ENCODE measurements at regions of chr21 and their contacts with region 1.

Region 1: DNA sequence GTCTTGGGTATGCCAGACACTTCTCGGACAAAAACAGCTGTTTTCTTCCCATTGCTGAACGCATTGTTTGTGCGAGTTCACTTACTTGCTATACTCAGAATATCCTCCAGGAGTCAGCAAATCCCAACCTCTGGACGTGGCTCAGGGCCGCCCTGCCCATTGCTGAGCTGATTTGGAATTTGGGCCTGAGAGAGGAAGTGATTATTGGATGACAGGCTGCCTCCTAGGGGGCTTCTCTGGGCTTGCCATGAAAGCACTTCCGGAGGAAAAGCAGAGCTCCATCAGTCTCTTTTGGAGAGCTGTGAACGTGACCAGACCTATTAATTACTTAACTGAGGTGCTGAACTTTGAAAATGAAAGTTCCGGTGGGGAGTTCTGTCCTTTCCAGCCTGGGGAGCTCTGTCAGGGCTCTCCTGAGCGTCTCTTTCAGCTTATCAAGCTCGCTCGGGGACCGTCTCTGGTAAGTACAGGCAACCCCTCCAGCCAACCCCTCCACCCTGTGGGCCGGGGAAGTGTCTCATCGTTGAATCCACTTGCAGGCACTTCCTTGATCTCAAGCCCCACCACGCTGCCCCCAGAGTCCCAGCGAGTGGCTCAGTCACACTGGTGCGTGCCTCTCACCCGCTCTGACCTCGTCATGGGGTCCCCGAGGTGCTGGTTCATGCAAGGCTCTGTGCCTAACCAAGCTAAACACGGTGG is 76.9 kb downstream of the CLIC6 start:
- DNase-seq: peak; percentile 82 to 84
- ATAC-seq: peak; percentile 89
- H3K4me3 ChIP-seq: no peak overlapping the region
- H3K27ac ChIP-seq: no peak overlapping the region
- H3K4me1 ChIP-seq: no peaks in the 10 kb centered on the region
- H3K27me3 ChIP-seq: no peaks in the 10 kb centered on the region

Region 2: DNA sequence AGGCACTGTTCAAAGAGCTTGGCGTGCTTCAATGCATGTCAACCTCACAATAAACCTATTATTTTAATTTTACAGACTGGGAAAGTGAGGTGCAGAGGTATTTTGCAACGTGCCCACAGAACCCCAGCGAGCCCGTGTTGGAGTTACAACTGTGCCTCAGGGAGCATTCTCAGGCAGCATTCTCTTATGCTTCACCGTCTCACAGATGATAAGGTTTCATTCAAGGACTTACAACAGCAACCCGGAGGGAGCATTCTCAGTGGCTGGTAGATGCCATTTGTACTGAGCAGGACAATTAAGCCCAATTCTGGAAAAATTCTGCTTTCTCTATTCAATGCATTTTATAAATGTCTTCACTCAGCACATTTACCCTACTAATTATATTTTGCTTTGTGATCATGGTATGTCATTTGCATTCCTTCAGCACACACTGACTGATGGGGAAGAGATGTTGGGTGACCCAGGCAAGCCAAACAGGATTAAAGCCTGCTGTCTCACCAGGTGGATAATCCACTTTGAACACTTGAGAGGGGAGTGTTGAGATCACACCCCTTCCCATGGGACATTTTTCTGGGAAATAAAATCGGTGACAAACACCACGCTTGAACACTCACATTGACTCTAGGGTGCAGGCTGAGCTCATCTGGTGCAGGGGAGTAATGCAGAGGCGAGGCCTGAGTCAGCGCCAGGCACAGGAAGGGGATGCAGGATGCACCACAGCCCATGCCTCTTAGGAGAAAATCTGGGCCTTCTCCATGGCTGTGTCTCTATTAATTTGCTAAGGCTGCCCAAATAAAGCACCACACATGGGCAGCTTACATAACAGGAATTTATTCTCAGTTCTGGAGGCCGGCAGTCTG is 37.0 kb after region 1 on chr21:
- intact Hi-C with region 1: no loop called
- DNase-seq: no peak
- ATAC-seq: no peak
- H3K4me3 ChIP-seq: no peak overlapping the region
- H3K27ac ChIP-seq: no peak overlapping the region
- H3K4me1 ChIP-seq: no peaks in the 10 kb centered on the region
- H3K27me3 ChIP-seq: no peaks in the 10 kb centered on the region

Region 3: DNA sequence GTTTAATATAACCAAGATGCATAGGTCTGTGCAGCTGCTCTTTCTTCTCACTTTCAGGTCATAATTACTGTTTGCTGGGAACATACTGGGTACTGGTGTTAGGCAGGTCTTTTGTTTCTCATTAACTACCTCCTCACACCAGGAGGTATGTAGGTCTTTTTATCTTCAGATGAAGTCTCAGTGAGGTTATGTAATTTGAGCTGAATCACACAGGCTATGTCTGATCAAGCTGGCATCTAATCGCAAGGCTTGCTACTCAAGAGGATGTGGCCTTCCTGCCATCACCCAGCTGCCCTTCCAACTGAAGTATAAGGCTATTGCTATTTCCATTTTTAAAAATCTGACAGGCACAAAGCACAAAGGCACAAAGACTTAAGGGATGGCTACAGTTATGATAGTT is 207.0 kb after region 1 on chr21:
- intact Hi-C with region 1: no loop called
- DNase-seq: no peak
- ATAC-seq: no peak
- H3K4me3 ChIP-seq: no peak overlapping the region
- H3K27ac ChIP-seq: no peak overlapping the region
- H3K4me1 ChIP-seq: no peaks in the 10 kb centered on the region
- H3K27me3 ChIP-seq: peaks cover 0 to 2% of the 10 kb centered on the region in 2 donors

Region 4: GRCh38 chr21:35400233-35400957 is 654.7 kb after region 1 on chr21:
- intact Hi-C with region 1: loop called (anchors 2 to 10 kb)
- DNase-seq: no peak
- ATAC-seq: no peak
- H3K4me3 ChIP-seq: no peak overlapping the region
- H3K27ac ChIP-seq: no peak overlapping the region
- H3K4me1 ChIP-seq: no peaks in the 10 kb centered on the region
- H3K27me3 ChIP-seq: no peaks in the 10 kb centered on the region

Region 5: GRCh38 chr21:35616090-35616489 is 870.4 kb after region 1 on chr21:
- intact Hi-C with region 1: loop called in 1 of 2 experiments (anchors 10 kb)
- DNase-seq: no peak
- ATAC-seq: no peak
- H3K4me3 ChIP-seq: no peak overlapping the region
- H3K27ac ChIP-seq: no peak overlapping the region
- H3K4me1 ChIP-seq: no peaks in the 10 kb centered on the region
- H3K27me3 ChIP-seq: no peaks in the 10 kb centered on the region

Region 6: GRCh38 chr21:35840197-35840799 is 1094.6 kb after region 1 on chr21:
- intact Hi-C with region 1: loop called (anchors 2 to 5 kb)
- DNase-seq: peak in 1 of 2 donors; percentile 67
- ATAC-seq: no peak
- H3K4me3 ChIP-seq: no peak overlapping the region
- H3K27ac ChIP-seq: no peak overlapping the region
- H3K4me1 ChIP-seq: no peaks in the 10 kb centered on the region
- H3K27me3 ChIP-seq: no peaks in the 10 kb centered on the region

Region 7: DNA sequence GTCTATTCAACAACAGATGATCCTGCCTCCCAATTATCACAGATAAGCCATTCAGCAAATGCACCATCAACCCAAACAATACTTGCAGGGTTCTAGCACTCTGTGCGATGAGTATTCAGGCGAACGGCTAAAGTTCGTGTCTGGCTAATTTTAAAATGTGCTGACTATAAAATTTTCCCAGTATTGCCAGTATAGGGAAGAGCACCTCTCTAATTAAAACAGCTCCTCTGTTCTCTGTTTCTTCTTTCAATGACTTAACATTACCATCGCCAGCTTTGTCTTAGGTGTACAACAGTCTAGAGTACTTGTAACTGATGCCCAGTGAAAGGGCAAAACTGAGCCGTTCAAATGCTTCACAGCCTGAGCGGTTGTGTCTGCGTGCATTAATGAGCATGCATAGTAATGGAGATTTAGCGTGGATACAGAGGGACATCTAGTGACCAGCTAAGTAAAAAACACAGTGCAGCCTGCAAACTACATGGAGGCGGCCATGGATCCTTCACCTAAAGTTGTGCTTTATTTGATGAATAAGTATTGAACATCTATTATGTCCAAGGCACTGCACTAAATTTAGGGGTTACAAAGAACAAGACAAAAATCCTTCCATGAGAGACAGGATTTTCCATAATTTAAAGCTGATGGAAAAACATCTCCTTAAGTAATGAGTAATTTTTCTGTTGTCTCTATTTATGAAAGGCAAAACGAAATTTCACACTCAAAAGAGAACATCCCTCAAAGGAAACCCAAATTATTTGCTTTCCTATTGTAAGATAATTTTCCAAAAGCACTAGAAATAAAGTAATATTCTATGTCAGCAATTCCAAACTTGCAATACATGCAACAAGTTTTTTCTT is 1194.6 kb after region 1 on chr21:
- intact Hi-C with region 1: loop called (anchors 2 to 5 kb)
- DNase-seq: peak in 1 of 2 donors; percentile 59
- ATAC-seq: peak; percentile 85
- H3K4me3 ChIP-seq: no peak overlapping the region
- H3K27ac ChIP-seq: no peak overlapping the region
- H3K4me1 ChIP-seq: no peaks in the 10 kb centered on the region
- H3K27me3 ChIP-seq: no peaks in the 10 kb centered on the region

Region 8: GRCh38 chr21:36028127-36029069 is 1282.7 kb after region 1 on chr21:
- intact Hi-C with region 1: loop called (anchors 5 to 10 kb)
- DNase-seq: peak; percentile 74 to 85
- ATAC-seq: peak; percentile 89
- H3K4me3 ChIP-seq: no peak overlapping the region
- H3K27ac ChIP-seq: no peak overlapping the region
- H3K4me1 ChIP-seq: no peaks in the 10 kb centered on the region
- H3K27me3 ChIP-seq: no peaks in the 10 kb centered on the region

Measured in aorta (tissue), 5 donors.